ENCODE measurements at regions of chr9 and their contacts with region 1.

Region 1: DNA sequence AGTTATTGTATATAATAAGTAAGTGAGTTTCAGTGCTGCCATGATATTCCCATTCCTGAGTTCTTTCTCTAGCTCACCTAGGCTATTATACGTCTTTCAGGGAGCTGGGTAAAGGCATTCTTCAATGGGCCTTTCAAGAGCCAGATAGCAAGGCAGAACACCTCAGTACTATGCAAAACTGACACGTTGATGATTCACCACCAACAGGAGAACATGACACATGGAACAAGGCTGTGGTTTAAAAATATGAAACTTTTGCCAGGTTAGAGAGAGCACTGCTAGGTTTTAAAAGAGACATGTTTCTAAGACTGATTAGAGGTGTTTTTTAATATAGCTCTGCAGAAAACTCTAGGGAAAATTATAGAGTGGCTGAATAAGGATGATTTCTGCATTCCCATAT is 95.9 kb downstream of the UGCG start:
- DNase-seq: no peak
- H3K4me3 Mint-ChIP-seq: no peak overlapping the region
- H3K27ac Mint-ChIP-seq: peak overlapping the region; percentile 37
- H3K4me1 Mint-ChIP-seq: peaks cover 26% of the 10 kb centered on the region
- H3K27me3 Mint-ChIP-seq: peaks cover 14% of the 10 kb centered on the region

Region 2: DNA sequence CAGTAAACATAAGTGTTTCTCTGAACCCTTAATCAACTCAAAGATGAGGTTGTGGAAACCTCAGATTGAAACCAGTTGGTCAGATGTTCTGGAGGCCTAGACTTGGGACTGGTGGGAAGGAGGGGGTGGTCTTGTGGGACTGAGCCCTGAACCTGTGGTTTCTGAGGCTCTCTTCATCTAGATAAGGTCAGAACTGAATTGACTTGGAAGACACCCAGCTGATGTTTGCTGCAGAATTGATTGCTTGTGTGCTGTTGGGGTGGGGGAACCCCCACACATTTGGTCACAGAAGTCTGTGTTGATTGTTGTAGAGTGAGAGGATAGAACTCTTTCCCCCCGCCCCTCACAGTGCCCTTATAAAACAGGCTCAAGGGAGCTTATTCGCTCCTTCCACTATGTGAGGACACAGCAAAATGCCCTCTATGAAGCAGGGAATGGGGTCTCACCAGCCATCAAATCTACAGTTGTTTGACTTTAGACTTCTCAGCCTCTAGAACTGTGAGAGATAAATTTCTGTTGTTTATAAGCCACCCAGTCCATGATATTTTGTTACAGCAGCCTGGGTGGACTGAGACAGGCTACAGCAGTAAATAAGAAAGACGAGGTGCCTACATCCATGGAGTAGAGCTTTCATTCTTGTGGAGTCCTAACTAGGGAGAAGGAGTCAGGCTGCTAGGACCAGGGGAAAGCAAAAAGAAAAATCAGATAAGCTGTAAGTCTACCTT is 121.6 kb before region 1 on chr9:
- intact Hi-C with region 1: loop called (anchors 2 kb)
- DNase-seq: peak; percentile 6
- H3K4me3 Mint-ChIP-seq: no peak overlapping the region
- H3K27ac Mint-ChIP-seq: peak overlapping the region; percentile 49
- H3K4me1 Mint-ChIP-seq: peaks cover 20% of the 10 kb centered on the region
- H3K27me3 Mint-ChIP-seq: peaks cover 30% of the 10 kb centered on the region

Region 3: DNA sequence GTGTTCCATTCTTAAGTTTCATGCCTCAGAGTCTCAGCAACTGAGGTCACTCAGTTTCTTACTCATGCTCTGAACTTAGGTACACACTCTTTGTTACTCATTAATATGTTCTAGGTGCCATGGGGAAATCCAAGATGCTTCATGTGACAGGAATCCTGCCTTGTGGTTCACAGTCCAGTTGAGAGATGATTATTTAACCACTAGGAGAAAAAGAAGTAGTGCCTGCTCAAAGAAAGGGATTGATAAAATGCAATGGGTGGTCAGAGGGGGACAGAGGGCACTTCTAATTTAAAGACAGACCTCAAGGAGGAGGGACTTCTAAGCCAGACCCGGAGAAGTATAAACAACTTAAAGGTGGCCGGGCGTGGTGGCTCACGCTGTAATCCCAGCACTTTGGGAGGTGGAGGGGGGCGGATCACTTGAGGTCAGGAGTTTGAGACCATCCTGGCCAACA is 26.9 kb before region 1 on chr9:
- intact Hi-C with region 1: loop called (anchors 1 kb)
- DNase-seq: no peak
- H3K4me3 Mint-ChIP-seq: no peak overlapping the region
- H3K27ac Mint-ChIP-seq: peak overlapping the region; percentile 65
- H3K4me1 Mint-ChIP-seq: peaks cover 7% of the 10 kb centered on the region
- H3K27me3 Mint-ChIP-seq: peaks cover 12% of the 10 kb centered on the region

Region 4: GRCh38 chr9:112028280-112029221 is 36.0 kb after region 1 on chr9:
- intact Hi-C with region 1: loop called (anchors 1 kb)
- DNase-seq: peak; percentile 6
- H3K4me3 Mint-ChIP-seq: peak overlapping the region; percentile 5
- H3K27ac Mint-ChIP-seq: peak overlapping the region; percentile 49
- H3K4me1 Mint-ChIP-seq: peaks cover 48% of the 10 kb centered on the region
- H3K27me3 Mint-ChIP-seq: peaks cover 4% of the 10 kb centered on the region

Region 5: GRCh38 chr9:112061152-112061740 is 68.7 kb after region 1 on chr9:
- intact Hi-C with region 1: loop called (anchors 1 kb)
- DNase-seq: peak; percentile 38
- H3K4me3 Mint-ChIP-seq: no peak overlapping the region
- H3K27ac Mint-ChIP-seq: peak overlapping the region; percentile 4
- H3K4me1 Mint-ChIP-seq: peaks cover 27% of the 10 kb centered on the region
- H3K27me3 Mint-ChIP-seq: no peaks in the 10 kb centered on the region

Region 6: DNA sequence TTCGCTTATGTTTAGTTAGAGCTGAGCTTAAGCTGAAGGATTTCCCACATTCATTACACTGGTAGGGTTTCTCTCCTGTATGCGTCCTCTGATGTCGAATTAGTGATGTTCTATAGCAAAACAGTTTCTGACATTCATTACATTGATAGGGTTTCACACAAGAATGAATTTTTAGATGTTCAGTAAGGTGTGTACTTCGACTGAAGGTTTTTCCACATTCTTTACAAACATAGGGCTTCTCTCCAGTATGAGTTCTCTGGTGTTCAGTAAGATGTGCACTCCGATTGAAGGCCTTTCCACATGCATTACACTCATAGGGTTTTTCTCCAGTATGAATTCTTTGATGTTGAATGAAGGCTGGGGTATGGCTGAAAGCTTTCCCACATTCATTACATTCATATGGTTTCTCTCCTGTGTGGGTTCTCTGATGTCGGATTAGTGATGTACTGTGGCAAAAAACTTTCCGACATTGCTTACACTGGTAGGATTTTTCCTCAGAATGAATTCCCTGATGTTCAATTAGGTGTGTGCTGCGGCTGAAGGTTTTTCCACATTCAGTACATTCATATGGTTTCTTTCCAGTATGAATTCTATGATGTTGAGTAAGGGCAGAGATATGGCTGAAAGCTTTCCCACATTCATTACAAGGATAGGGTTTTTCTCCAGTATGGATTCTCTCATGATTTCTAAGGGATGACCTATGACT is 1004.9 kb after region 1 on chr9:
- intact Hi-C with region 1: no loop called
- DNase-seq: no peak
- H3K4me3 Mint-ChIP-seq: no peak overlapping the region
- H3K27ac Mint-ChIP-seq: no peak overlapping the region
- H3K4me1 Mint-ChIP-seq: no peaks in the 10 kb centered on the region
- H3K27me3 Mint-ChIP-seq: no peaks in the 10 kb centered on the region

Measured in activated T-helper 1 cell treated with anti-CD3 and anti-CD28 coated beads, Interleukin-12 subunit alpha, Interleukin-12 subunit beta, Interleukin-2, Interleukin-4 antibody, amounts not matched to agents 30 ng/mL and 10 ng/mL and 1 ng/mL, durations not matched to agents 14 hours and 24 hours and 36 hours (primary cell).